ENCODE measurements at regions of chr12 and their contacts with region 1.

Region 1: DNA sequence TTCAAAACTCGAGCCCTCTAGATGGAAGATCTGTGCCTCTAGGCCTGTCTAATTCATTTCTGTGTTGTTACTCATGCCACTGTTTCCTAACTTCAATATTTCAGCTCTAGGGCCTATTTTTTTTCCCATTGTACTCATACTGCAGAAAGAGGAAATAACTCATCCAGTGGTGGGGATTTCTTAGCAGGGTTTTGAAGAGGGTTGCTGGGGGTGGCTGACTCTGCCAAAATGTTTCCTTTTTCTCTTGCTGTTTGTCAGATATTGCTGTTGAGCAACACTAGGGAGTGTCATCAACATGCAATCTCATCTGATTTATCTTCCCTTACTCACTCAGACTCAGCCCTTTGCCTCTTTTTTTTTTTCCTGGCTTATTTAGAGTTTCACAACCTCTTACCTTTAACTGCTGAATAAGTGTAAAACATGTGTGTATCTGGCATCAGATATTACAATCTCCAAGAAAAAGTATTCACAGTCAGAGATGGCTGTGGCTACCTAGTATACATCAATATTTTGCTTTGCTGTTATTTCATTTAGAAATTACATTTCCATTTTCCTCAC is 189.5 kb downstream of the DUSP6 start:
- DNase-seq: peak; percentile 82
- ATAC-seq: peak; percentile 91
- H3K4me3 Mint-ChIP-seq: no peak overlapping the region
- H3K27ac Mint-ChIP-seq: no peak overlapping the region
- H3K4me1 Mint-ChIP-seq: peaks cover 14% of the 10 kb centered on the region
- H3K27me3 Mint-ChIP-seq: no peaks in the 10 kb centered on the region

Region 2: DNA sequence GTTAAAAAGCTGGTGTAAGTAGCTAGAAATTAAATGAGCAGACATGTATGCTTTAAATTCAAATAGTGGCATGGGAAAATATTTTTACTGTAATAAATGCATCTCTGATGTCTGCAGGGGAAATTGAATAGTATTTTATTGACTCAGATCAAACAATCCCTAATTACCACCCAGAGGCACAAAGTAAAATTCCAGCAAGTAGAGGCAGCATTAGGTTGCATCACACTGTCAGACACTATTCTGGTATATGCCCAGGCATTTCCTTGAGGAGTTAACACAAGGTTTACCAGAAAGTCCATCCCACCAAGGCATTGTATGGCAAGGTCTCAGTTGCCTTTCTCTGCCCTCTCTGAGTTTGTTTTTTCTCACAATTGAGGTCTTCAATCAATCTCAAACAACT is 380.9 kb before region 1 on chr12:
- CTCF ChIA-PET with region 1: no interaction called
- POLR2A ChIA-PET with region 1: no interaction called
- intact Hi-C with region 1: no loop called
- DNase-seq: no peak
- ATAC-seq: no peak
- H3K4me3 Mint-ChIP-seq: no peak overlapping the region
- H3K27ac Mint-ChIP-seq: no peak overlapping the region
- H3K4me1 Mint-ChIP-seq: no peaks in the 10 kb centered on the region
- H3K27me3 Mint-ChIP-seq: peaks cover 4% of the 10 kb centered on the region

Region 3: GRCh38 chr12:89040146-89040964 is 122.4 kb before region 1 on chr12:
- CTCF ChIA-PET with region 1: interaction called, 3 read pairs
- POLR2A ChIA-PET with region 1: interaction called, 3 read pairs
- intact Hi-C with region 1: loop called (anchors 1 kb)
- DNase-seq: peak; percentile 92
- ATAC-seq: peak; percentile 78
- H3K4me3 Mint-ChIP-seq: peak overlapping the region; percentile 40
- H3K27ac Mint-ChIP-seq: peak overlapping the region; percentile 99
- H3K4me1 Mint-ChIP-seq: peaks cover 54% of the 10 kb centered on the region
- H3K27me3 Mint-ChIP-seq: no peaks in the 10 kb centered on the region

Region 4: GRCh38 chr12:89135976-89136634 is 26.7 kb before region 1 on chr12:
- CTCF ChIA-PET with region 1: no interaction called
- POLR2A ChIA-PET with region 1: interaction called, 3 read pairs
- intact Hi-C with region 1: loop called (anchors 1 kb)
- DNase-seq: peak; percentile 10
- ATAC-seq: peak; percentile 60
- H3K4me3 Mint-ChIP-seq: no peak overlapping the region
- H3K27ac Mint-ChIP-seq: no peak overlapping the region
- H3K4me1 Mint-ChIP-seq: peaks cover 30% of the 10 kb centered on the region
- H3K27me3 Mint-ChIP-seq: peaks cover 8% of the 10 kb centered on the region

Region 5: DNA sequence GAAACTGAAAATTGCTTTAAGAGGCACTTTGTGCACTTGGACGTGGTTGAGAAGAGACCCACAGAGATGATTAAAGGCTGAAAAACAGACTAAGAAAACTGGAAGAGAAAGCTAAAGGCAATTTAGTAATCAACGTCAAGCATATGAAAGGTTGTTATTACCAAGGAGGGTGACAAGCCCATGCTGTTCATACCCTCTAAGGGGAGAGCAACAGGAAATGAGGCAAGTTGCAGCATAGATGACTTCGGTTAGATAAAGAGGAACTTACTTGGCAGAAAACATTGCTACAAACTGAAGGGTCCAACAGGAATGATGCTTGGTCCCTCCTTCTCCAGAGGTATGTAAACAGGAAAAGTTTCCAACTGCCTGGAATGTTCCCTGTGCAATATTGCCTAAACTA is 81.8 kb after region 1 on chr12:
- CTCF ChIA-PET with region 1: interaction called, 3 read pairs
- POLR2A ChIA-PET with region 1: no interaction called
- intact Hi-C with region 1: loop called (anchors 1 to 2 kb)
- DNase-seq: peak; percentile 48
- ATAC-seq: peak; percentile 88
- H3K4me3 Mint-ChIP-seq: peak overlapping the region; percentile 27
- H3K27ac Mint-ChIP-seq: peak overlapping the region; percentile 84
- H3K4me1 Mint-ChIP-seq: peaks cover 38% of the 10 kb centered on the region
- H3K27me3 Mint-ChIP-seq: no peaks in the 10 kb centered on the region

Region 6: GRCh38 chr12:89470741-89471509 is 308.1 kb after region 1 on chr12:
- CTCF ChIA-PET with region 1: no interaction called
- POLR2A ChIA-PET with region 1: no interaction called
- intact Hi-C with region 1: loop called in 1 of 2 experiments (anchors 2 kb)
- DNase-seq: peak; percentile 14
- ATAC-seq: peak; percentile 57
- H3K4me3 Mint-ChIP-seq: no peak overlapping the region
- H3K27ac Mint-ChIP-seq: peak overlapping the region; percentile 69
- H3K4me1 Mint-ChIP-seq: peaks cover 57% of the 10 kb centered on the region
- H3K27me3 Mint-ChIP-seq: no peaks in the 10 kb centered on the region

Measured in activated CD4-positive, alpha-beta T cell treated with anti-CD3 and anti-CD28 coated beads for 36 hours (primary cell).